Natural killer cell (primary cell): ENCODE measurements at regions of chr2 and their contacts with region 1.

Region 1: GRCh38 chr2:69643602-69644505 is at the start of gene AAK1:
- DNase-seq: peak; percentile 81 to 90
- ATAC-seq: peak; percentile 58 to 80 (median 74)
- H3K4me3 ChIP-seq: peak within 1 kb of the TSS; percentile 96
- H3K4me3 Mint-ChIP-seq: peak within 1 kb of the TSS; percentile 97
- H3K27ac ChIP-seq: peak within 1 kb of the TSS; percentile 84
- H3K27ac Mint-ChIP-seq: peak within 1 kb of the TSS; percentile 95 to 97
- H3K4me1 ChIP-seq: peaks cover 62% of the 10 kb centered on the region
- H3K4me1 Mint-ChIP-seq: peaks cover 81 to 82% of the 10 kb centered on the region in 2 donors
- H3K27me3 ChIP-seq: no peaks in the 10 kb centered on the region
- H3K27me3 Mint-ChIP-seq: no peaks in the 10 kb centered on the region
- CTCF ChIP-seq: no peak
- total RNA-seq, gene AAK1: 174 to 249 (median 204) TPM

Region 2: GRCh38 chr2:69356471-69356870 is 287.4 kb before region 1 on chr2:
- intact Hi-C with region 1: no loop called
- DNase-seq: no peak
- ATAC-seq: no peak
- H3K4me3 ChIP-seq: no peak overlapping the region
- H3K4me3 Mint-ChIP-seq: no peak overlapping the region
- H3K27ac ChIP-seq: no peak overlapping the region
- H3K27ac Mint-ChIP-seq: no peak overlapping the region
- H3K4me1 ChIP-seq: no peaks in the 10 kb centered on the region
- H3K4me1 Mint-ChIP-seq: no peaks in the 10 kb centered on the region
- H3K27me3 ChIP-seq: no peaks in the 10 kb centered on the region
- H3K27me3 Mint-ChIP-seq: no peaks in the 10 kb centered on the region
- CTCF ChIP-seq: no peak

Region 3: GRCh38 chr2:69567157-69567908 is 76.5 kb before region 1 on chr2:
- intact Hi-C with region 1: no loop called
- DNase-seq: peak in 1 of 2 donors; percentile 22
- ATAC-seq: no peak
- H3K4me3 ChIP-seq: no peak overlapping the region
- H3K4me3 Mint-ChIP-seq: peak overlapping the region; percentile 18
- H3K27ac ChIP-seq: no peak overlapping the region
- H3K27ac Mint-ChIP-seq: peak overlapping the region; percentile 59 to 84
- H3K4me1 ChIP-seq: peaks cover 39% of the 10 kb centered on the region
- H3K4me1 Mint-ChIP-seq: peaks cover 88 to 89% of the 10 kb centered on the region in 2 donors
- H3K27me3 ChIP-seq: no peaks in the 10 kb centered on the region
- H3K27me3 Mint-ChIP-seq: no peaks in the 10 kb centered on the region
- CTCF ChIP-seq: no peak

Region 4: DNA sequence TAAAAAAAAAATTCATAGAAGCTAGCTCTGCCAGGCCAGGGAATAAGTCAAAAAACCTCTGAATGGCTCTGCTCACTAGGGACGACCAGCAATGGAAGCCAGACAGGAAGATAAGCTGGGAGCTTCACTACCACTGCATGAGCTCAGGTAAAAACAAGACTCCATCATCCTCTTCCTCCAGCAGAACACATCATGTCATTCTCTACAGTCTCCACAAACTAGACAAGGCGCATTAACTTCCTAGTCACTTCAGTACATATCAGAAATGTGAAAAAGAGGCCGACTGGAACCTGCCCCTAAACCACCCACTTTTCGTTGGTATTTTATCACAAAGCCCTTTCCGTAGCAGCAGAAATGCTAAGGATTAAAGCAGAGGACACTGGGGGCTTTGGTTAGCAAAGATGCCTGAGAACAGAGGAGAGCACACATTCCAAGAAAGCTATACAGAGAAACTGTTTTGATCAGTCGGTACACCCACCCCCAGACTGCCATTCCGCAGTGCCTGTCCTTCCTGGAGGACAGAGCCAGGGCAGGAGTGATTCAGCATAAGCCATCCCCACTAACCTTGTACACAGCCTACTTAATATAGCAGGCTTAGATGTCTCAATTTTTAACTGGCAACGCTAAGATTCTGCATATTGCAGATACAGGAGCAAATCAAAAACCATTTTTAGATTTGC is 53.7 kb before region 1 on chr2:
- intact Hi-C with region 1: loop called (anchors 10 kb)
- DNase-seq: no peak
- ATAC-seq: no peak
- H3K4me3 ChIP-seq: no peak overlapping the region
- H3K4me3 Mint-ChIP-seq: no peak overlapping the region
- H3K27ac ChIP-seq: no peak overlapping the region
- H3K27ac Mint-ChIP-seq: peak overlapping the region; percentile 58 to 76
- H3K4me1 ChIP-seq: peaks cover 9% of the 10 kb centered on the region
- H3K4me1 Mint-ChIP-seq: peaks cover 70 to 72% of the 10 kb centered on the region in 2 donors
- H3K27me3 ChIP-seq: no peaks in the 10 kb centered on the region
- H3K27me3 Mint-ChIP-seq: no peaks in the 10 kb centered on the region
- CTCF ChIP-seq: no peak

Region 5: DNA sequence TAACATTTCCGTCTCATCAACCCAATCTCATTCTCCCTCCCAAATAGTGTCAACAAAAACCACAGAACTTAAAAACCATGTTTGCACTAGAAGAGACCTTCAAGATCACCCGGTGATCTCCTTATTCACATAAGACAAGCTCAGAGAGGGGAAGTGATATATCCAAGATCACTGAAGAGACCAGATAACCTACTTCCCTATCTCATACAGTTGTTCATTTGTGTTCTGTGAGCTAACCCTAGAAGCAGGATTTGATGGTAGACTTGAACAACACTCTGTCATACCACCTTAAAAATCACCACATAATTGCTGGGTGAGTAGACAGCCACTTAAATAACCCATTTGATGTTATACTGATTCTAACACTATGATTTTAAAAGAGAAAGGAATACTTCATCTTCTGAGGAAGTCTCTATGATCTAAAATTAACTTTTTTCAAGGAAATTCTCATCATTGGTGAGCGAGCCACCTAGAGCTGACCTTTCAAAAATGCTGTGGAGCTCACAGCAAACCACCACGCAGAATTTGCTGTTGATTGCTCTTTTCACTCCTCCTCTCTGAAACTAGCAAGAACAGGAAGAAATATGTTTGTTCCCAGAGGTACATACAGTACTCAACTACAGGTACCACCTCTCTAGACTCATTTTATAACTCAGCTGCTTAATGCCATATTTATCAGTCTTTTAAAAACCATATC is 15.4 kb before region 1 on chr2:
- intact Hi-C with region 1: loop called (anchors 2 kb)
- DNase-seq: peak in 1 of 2 donors; percentile 35
- ATAC-seq: peak; percentile 66 to 78 (median 73)
- H3K4me3 ChIP-seq: no peak overlapping the region
- H3K4me3 Mint-ChIP-seq: no peak overlapping the region
- H3K27ac ChIP-seq: peak overlapping the region; percentile 34
- H3K27ac Mint-ChIP-seq: no peak overlapping the region
- H3K4me1 ChIP-seq: peaks cover 11% of the 10 kb centered on the region
- H3K4me1 Mint-ChIP-seq: peaks cover 18% of the 10 kb centered on the region in 2 donors
- H3K27me3 ChIP-seq: no peaks in the 10 kb centered on the region
- H3K27me3 Mint-ChIP-seq: no peaks in the 10 kb centered on the region
- CTCF ChIP-seq: no peak

Region 6: DNA sequence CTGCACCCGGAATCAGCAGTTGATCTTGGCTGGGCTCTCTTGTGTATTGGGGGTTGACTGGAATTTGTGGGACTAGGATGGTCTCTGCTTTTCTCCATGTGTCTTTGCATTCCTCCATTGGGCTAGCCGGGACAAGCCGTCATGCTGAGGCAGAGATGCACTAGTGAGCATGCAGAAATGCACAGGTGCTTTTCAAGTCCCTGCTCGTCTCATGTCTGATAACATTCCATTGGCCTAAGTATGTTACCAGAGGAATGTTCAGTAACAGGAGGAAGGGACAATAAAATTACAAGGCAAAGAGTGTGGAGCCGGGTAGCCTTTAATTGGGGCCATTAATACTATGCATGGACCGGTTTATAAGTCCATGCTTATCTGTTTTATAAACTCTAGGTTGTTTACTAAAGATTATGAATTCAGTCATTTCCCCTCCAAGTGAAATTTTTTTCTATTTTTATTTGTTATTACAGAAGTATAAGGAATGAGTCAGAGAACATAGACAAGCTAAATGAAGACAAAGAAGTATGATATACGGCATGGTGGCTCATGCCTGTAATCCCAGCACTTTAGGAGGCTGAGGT is 24.0 kb after region 1 on chr2:
- intact Hi-C with region 1: no loop called
- DNase-seq: no peak
- ATAC-seq: no peak
- H3K4me3 ChIP-seq: no peak overlapping the region
- H3K4me3 Mint-ChIP-seq: no peak overlapping the region
- H3K27ac ChIP-seq: no peak overlapping the region
- H3K27ac Mint-ChIP-seq: peak overlapping the region in 1 of 2 donors; percentile 11
- H3K4me1 ChIP-seq: no peaks in the 10 kb centered on the region
- H3K4me1 Mint-ChIP-seq: peaks cover 9 to 14% of the 10 kb centered on the region in 2 donors
- H3K27me3 ChIP-seq: no peaks in the 10 kb centered on the region
- H3K27me3 Mint-ChIP-seq: no peaks in the 10 kb centered on the region
- CTCF ChIP-seq: no peak

Region 7: DNA sequence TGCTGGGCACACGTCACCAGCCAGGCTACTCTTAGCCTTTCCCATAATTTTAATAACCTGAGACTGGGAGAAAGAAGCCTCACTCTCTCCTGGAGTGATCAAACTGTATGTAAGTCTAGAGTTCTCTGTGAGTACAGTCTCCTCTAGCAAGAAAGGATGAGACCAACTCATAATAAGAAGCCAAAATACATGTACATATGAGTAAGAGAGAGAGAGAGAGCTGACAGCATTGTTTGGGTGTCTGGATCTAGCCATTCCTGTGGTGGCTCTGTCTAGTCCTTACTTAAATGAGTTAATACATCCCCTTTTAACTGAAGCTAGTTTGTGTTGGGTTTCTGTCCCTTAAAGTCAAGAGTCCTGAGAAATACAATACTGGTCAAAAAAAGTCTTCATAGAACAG is 72.1 kb after region 1 on chr2:
- intact Hi-C with region 1: loop called (anchors 2 kb)
- DNase-seq: no peak
- ATAC-seq: no peak
- H3K4me3 ChIP-seq: no peak overlapping the region
- H3K4me3 Mint-ChIP-seq: no peak overlapping the region
- H3K27ac ChIP-seq: no peak overlapping the region
- H3K27ac Mint-ChIP-seq: no peak overlapping the region
- H3K4me1 ChIP-seq: peaks cover 6% of the 10 kb centered on the region
- H3K4me1 Mint-ChIP-seq: peaks cover 6 to 7% of the 10 kb centered on the region in 2 donors
- H3K27me3 ChIP-seq: no peaks in the 10 kb centered on the region
- H3K27me3 Mint-ChIP-seq: no peaks in the 10 kb centered on the region
- CTCF ChIP-seq: no peak

Region 8: DNA sequence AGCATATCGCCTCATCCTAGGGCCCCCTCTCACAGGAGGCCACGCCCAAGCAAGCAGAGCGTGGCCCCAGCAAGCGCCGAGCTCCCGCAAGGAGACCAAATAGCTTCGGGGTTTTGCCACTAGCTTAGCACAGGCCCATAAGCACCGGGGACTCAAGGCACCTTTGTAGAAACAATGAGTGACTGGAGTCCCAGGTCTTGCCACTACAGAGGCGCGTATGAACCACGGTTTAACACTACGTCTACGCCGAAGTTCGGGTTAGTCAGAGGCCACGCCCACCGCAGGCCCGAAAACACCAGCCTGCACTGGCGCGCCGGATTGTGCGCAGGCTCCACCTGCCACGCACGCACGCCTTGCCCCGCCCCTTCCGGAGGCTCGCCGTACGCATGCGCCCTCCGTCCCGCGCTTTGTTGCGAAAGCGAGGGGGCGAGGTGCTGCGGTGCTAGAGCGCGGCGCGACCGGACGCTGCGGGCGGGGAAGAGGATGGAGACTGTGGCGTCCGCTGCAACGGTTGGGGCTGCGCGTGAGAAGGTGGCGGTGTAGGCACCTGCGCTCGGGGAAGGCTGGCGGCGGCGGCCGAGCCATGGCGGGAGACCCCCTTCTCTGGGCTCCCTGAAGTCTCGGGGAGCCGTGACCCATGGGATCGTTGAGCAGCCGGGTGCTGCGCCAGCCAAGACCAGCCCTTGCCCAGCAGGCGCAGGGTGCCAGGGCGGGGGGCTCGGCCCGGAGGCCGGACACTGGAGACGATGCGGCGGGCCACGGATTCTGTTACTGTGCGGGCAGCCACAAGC is 185.6 kb after region 1 on chr2 and contains the start of gene GMCL1:
- intact Hi-C with region 1: loop called (anchors 5 kb)
- DNase-seq: peak; percentile 99 to 100
- ATAC-seq: peak; percentile 92 to 98 (median 92)
- H3K4me3 ChIP-seq: peak within 1 kb of the TSS; percentile 73
- H3K4me3 Mint-ChIP-seq: peak within 1 kb of the TSS; percentile 99
- H3K27ac ChIP-seq: peak within 1 kb of the TSS; percentile 84
- H3K27ac Mint-ChIP-seq: peak within 1 kb of the TSS; percentile 81 to 99
- H3K4me1 ChIP-seq: peaks cover 27% of the 10 kb centered on the region
- H3K4me1 Mint-ChIP-seq: peaks cover 40 to 48% of the 10 kb centered on the region in 2 donors
- H3K27me3 ChIP-seq: no peaks in the 10 kb centered on the region
- H3K27me3 Mint-ChIP-seq: no peaks in the 10 kb centered on the region
- CTCF ChIP-seq: no peak
- total RNA-seq, gene GMCL1: 34.6 to 49.4 (median 35.9) TPM